PC-3 (cell line): ENCODE measurements at regions of chr4 and their contacts with region 1.

Region 1: GRCh38 chr4:30714408-30715027 is 5.7 kb upstream of the PCDH7 start:
- DNase-seq: peak; percentile 65
- ATAC-seq: no peak
- H3K4me3 ChIP-seq: no peak overlapping the region
- H3K27ac ChIP-seq: no peak overlapping the region
- H3K4me1 ChIP-seq: peaks cover 5% of the 10 kb centered on the region; the same call in 1 of the 2 replicates
- H3K27me3 ChIP-seq: no peaks in the 10 kb centered on the region
- CTCF ChIP-seq: peak; percentile 76

Region 2: GRCh38 chr4:30726090-30726675 is 11.7 kb after region 1 on chr4:
- CTCF ChIA-PET with region 1: no interaction called
- POLR2A ChIA-PET with region 1: no interaction called
- intact Hi-C with region 1: no loop called
- DNase-seq: no peak
- ATAC-seq: no peak
- H3K4me3 ChIP-seq: no peak overlapping the region
- H3K27ac ChIP-seq: no peak overlapping the region
- H3K4me1 ChIP-seq: 0 out of 2 replicates have a peak, but pooled peaks cover 5% of the 10 kb centered on the region
- H3K27me3 ChIP-seq: no peaks in the 10 kb centered on the region
- CTCF ChIP-seq: no peak

Region 3: DNA sequence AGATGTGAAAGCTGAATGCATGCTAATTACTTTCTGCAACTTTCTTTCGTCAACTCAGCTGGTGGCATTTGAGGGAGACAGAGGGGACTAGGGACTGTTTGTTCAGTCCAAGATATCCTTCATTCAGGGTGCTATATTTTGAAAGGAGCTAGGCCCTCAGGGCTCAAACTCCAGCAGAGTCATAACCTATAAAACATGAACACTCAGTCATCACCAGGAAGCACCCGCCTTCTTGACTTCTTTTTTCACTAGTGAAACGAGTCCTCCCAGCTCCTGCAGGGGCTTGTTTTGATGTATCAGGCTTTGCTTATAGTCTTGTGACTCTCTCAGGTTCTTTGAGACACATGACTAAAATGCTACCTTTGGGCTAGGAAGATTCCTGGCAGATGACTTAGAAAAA is 236.2 kb after region 1 on chr4:
- CTCF ChIA-PET with region 1: no interaction called
- POLR2A ChIA-PET with region 1: no interaction called
- intact Hi-C with region 1: loop called (anchors 5 kb)
- DNase-seq: peak; percentile 91
- ATAC-seq: peak; percentile 96
- H3K4me3 ChIP-seq: no peak overlapping the region
- H3K27ac ChIP-seq: peak overlapping the region; percentile 42; the same call in 1 of the 2 replicates
- H3K4me1 ChIP-seq: peaks cover 35% of the 10 kb centered on the region
- H3K27me3 ChIP-seq: no peaks in the 10 kb centered on the region
- CTCF ChIP-seq: no peak

Region 4: GRCh38 chr4:31370866-31371465 is 656.4 kb after region 1 on chr4:
- CTCF ChIA-PET with region 1: no interaction called
- POLR2A ChIA-PET with region 1: no interaction called
- intact Hi-C with region 1: loop called (anchors 10 kb)
- DNase-seq: peak; percentile 75
- ATAC-seq: 0 out of 2 replicates have a peak, but pooled peaks have one; percentile 37
- H3K4me3 ChIP-seq: no peak overlapping the region
- H3K27ac ChIP-seq: no peak overlapping the region
- H3K4me1 ChIP-seq: peaks cover 6% of the 10 kb centered on the region; the same call in 1 of the 2 replicates
- H3K27me3 ChIP-seq: no peaks in the 10 kb centered on the region
- CTCF ChIP-seq: peak; percentile 77

Region 5: GRCh38 chr4:32042486-32043247 is 1328.1 kb after region 1 on chr4:
- CTCF ChIA-PET with region 1: no interaction called
- POLR2A ChIA-PET with region 1: no interaction called
- intact Hi-C with region 1: loop called (anchors 10 kb)
- DNase-seq: no peak
- ATAC-seq: peak; percentile 83
- H3K4me3 ChIP-seq: no peak overlapping the region
- H3K27ac ChIP-seq: no peak overlapping the region
- H3K4me1 ChIP-seq: peaks cover 10% of the 10 kb centered on the region; the same call in 1 of the 2 replicates
- H3K27me3 ChIP-seq: no peaks in the 10 kb centered on the region
- CTCF ChIP-seq: peak; percentile 28; the same call in 1 of the 2 replicates